ENCODE measurements at regions of chr5 and their contacts with region 1.

Region 1: DNA sequence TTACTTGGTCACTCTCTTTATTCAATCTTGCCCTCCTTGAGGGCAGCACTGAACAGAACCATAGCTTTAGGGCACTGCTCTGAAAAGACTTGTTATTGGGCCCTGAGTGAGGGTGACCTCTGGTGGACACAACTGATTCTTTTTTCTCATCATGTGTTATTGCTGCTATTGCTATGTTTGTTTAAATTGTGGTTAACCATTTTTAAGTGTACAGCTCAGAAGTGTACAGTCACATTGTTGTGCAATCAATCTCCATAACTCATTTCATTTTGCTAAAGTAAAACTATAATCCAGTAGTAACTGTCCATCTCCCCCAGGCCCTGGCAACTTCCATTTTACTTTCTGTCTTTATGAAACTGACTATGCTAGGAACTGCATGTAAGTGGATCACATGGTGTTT is 351.1 kb upstream of the RIOK2 start:
- DNase-seq: peak; percentile 38

Region 2: DNA sequence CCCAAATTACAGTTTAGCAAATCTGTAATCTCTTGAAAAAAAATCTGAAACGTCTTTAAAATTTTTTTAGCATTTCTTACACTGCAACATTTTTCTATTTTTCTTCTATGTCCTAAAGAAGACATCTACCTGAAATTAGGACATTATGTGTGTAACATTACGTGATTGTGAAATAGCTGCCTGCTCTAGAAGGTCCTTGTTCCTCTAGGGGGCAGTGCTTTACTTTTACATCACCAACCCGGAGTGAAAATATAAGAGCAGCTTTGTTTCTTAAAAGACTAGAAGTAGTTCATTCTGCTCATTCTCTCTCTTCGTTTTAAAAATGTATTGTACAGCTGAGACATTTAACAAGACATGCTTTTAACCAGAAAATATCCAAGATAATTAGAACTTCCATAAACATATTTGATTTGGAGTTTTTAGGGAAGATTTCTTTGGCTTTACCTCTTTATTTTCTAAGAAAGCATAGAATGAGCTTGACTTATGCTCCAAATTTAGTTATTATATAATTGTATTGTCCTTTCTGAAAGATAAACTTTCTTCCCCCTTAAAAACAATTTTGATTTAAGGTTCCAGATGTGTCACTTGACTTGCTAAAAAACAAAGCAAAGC is 303.0 kb before region 1 on chr5:
- CTCF ChIA-PET with region 1: interaction called, 19 read pairs
- POLR2A ChIA-PET with region 1: no interaction called
- DNase-seq: peak; percentile 53

Measured in HEK293T (cell line).